ENCODE measurements at regions of chr19 and their contacts with region 1.

Region 1: DNA sequence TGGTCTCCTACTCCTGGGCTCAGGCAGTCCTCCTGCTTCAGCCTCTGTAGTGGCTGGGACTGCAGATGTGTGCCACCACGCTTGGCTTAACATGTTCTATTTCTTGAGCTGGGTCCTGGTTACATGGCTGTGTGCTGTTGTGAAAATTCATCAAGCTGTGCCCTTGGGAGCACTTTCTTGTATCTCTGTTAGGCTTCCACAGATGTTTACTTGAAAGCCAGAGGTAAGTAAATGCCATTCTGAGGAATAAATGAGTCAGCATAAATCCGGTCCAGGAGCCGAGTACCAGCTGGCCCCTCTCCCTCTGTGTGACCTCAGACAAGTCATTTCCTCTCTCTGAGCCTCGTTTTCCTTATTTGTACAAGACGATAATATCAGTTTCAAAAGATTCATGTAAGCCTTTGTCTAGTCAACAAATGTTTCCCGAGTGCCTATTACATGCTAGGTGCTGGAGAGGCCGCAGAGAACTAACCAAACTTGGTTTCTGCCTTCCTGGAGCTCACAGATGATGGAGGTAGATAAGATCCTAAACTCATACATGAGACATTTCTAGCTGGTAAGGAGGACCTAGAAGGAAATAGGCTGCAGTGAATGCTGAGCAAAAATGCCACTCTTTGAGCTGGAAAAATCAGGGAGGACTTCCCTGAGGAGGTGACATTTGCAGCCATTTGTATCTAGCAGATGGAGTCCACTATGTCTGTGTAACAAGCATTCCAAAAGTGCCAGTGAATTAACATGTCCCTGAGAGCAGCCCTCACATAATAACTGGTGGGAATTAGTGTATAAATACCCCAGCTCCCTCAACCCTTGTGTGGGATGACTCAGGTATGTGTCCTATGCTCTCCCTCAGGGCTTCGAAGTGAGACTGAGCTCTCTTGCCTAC is 2.7 kb upstream of the RASAL3 start:
- DNase-seq: peak; percentile 83
- H3K4me3 Mint-ChIP-seq: peak overlapping the region; percentile 66
- H3K27ac Mint-ChIP-seq: peak overlapping the region; percentile 98
- H3K4me1 Mint-ChIP-seq: peaks cover 64% of the 10 kb centered on the region
- H3K27me3 Mint-ChIP-seq: peaks cover 8% of the 10 kb centered on the region

Region 2: GRCh38 chr19:15379083-15379995 is 87.8 kb before region 1 on chr19 and contains the start of gene AKAP8:
- CTCF ChIA-PET with region 1: interaction called, 5 read pairs
- POLR2A ChIA-PET with region 1: interaction called, 13 read pairs
- DNase-seq: peak; percentile 98
- H3K4me3 Mint-ChIP-seq: peak within 1 kb of the TSS; percentile 87
- H3K27ac Mint-ChIP-seq: peak within 1 kb of the TSS; percentile 99
- H3K4me1 Mint-ChIP-seq: peaks cover 36% of the 10 kb centered on the region
- H3K27me3 Mint-ChIP-seq: no peaks in the 10 kb centered on the region
- total RNA-seq, gene AKAP8: 43.8 to 45.9 TPM

Region 3: GRCh38 chr19:15393963-15394362 is 73.1 kb before region 1 on chr19:
- CTCF ChIA-PET with region 1: no interaction called
- POLR2A ChIA-PET with region 1: no interaction called
- DNase-seq: no peak
- H3K4me3 Mint-ChIP-seq: no peak overlapping the region
- H3K27ac Mint-ChIP-seq: no peak overlapping the region
- H3K4me1 Mint-ChIP-seq: peaks cover 1% of the 10 kb centered on the region
- H3K27me3 Mint-ChIP-seq: no peaks in the 10 kb centered on the region

Region 4: DNA sequence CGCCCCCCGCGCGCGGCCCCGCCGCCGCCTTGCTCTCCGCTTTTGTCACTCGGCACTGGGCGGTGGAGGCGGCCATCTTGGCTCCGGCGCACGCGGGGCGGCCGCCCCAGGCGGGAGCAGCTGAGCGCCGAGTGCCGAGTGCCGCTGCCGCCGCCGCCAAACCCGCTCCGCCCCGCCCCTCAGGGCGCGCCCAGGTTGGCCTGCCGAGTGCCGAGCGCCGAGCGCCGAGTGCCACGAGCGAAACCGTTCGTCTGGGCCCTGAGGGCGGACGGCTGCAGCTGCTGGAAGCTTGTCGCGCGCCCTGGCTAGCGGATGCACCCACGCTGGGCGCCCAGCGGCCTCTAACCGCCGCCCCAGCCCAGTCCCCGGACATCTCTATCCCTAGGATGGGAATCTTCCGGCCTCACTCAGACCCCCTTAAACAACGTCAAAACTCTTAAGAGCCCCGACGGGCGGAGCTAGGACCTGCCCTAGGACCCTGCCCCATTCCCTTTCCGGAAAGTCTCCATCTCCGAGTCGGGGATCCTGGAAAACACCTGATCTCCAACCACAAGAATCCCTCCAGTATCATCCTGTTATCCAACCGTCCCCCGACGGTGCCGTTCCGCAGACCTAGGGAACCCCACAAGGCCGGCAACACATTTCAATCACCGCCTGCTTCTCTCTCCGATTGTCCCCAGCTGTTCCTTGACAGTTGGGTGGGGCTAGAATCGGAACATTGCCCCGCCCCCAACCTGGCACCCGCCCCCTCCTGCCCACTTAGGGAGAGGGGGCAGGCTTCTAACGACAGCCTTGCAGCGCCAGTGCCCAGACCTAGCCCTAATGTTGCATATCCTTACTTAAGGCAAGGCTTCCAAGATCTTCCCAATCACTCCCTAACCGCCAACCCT is 34.2 kb before region 1 on chr19:
- CTCF ChIA-PET with region 1: interaction called, 3 read pairs
- POLR2A ChIA-PET with region 1: interaction called, 71 read pairs
- DNase-seq: peak; percentile 95
- H3K4me3 Mint-ChIP-seq: peak overlapping the region; percentile 93
- H3K27ac Mint-ChIP-seq: peak overlapping the region; percentile 94
- H3K4me1 Mint-ChIP-seq: peaks cover 36% of the 10 kb centered on the region
- H3K27me3 Mint-ChIP-seq: no peaks in the 10 kb centered on the region

Region 5: DNA sequence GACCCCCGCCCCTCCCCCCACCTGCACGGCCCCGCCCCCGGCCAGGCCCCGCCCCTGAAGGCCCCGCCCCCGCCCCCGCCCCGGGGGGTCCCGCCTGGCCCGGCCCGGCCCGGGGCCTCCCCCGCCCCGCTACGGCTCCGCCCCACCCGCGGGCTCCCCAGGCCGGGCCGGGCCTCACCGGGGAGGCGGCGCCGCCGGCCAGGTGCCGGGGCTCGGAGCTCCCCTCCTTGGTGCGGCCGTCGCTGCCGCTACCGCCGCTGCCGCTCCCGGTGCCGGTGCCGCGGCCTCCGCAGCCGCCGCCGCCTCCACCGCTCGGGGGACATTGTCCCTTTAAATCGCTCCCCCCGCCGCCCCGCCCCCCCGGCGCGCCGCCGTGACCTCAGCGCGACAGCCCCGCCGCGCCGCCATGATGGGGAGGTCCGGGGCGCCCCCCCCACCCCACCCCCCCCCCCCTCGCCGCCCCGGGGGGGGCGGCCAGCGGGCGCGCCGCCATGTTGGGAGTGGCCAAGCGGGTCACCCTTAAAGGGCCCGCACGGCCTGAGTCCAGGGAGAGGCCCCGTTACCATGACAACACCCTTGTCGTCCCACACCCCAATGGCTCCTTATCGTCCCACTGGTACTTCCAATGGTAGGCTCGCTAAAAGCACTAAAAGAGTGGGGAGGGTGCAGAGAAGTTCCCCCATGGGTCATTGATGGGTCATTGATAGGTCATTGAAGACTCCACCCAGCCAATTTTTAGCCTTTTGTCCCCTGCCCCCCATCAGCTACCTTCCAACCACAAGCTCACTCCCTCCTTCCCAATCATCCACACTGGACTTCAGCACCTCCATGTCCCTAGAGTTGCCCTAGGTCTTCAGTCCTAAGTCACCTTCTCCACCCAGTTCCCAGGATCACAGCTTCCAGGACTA is 17.2 kb before region 1 on chr19 and contains the start of gene WIZ:
- CTCF ChIA-PET with region 1: interaction called, 7 read pairs
- POLR2A ChIA-PET with region 1: interaction called, 124 read pairs
- DNase-seq: peak; percentile 84
- H3K4me3 Mint-ChIP-seq: peak within 1 kb of the TSS; percentile 70
- H3K27ac Mint-ChIP-seq: peak within 1 kb of the TSS; percentile 81
- H3K4me1 Mint-ChIP-seq: peaks cover 29% of the 10 kb centered on the region
- H3K27me3 Mint-ChIP-seq: no peaks in the 10 kb centered on the region
- total RNA-seq, gene WIZ: 25.3 to 25.4 TPM

Region 6: GRCh38 chr19:15479391-15480345 is 12.6 kb after region 1 on chr19 and contains the start of gene PGLYRP2:
- CTCF ChIA-PET with region 1: no interaction called
- POLR2A ChIA-PET with region 1: interaction called, 14 read pairs
- DNase-seq: no peak
- H3K4me3 Mint-ChIP-seq: no peak within 1 kb of the TSS
- H3K27ac Mint-ChIP-seq: no peak within 1 kb of the TSS
- H3K4me1 Mint-ChIP-seq: peaks cover 35% of the 10 kb centered on the region
- H3K27me3 Mint-ChIP-seq: peaks cover 3% of the 10 kb centered on the region
- total RNA-seq, gene PGLYRP2: 0.08 to 0.10 TPM

Region 7: GRCh38 chr19:15508035-15508710 is 41.1 kb after region 1 on chr19 and contains the start of gene CYP4F22:
- CTCF ChIA-PET with region 1: interaction called, 4 read pairs
- POLR2A ChIA-PET with region 1: interaction called, 22 read pairs
- DNase-seq: no peak
- H3K4me3 Mint-ChIP-seq: peak within 1 kb of the TSS; percentile 46
- H3K27ac Mint-ChIP-seq: no peak within 1 kb of the TSS
- H3K4me1 Mint-ChIP-seq: peaks cover 31% of the 10 kb centered on the region
- H3K27me3 Mint-ChIP-seq: peaks cover 41% of the 10 kb centered on the region
- total RNA-seq, gene CYP4F22: 1.4 TPM

Region 8: DNA sequence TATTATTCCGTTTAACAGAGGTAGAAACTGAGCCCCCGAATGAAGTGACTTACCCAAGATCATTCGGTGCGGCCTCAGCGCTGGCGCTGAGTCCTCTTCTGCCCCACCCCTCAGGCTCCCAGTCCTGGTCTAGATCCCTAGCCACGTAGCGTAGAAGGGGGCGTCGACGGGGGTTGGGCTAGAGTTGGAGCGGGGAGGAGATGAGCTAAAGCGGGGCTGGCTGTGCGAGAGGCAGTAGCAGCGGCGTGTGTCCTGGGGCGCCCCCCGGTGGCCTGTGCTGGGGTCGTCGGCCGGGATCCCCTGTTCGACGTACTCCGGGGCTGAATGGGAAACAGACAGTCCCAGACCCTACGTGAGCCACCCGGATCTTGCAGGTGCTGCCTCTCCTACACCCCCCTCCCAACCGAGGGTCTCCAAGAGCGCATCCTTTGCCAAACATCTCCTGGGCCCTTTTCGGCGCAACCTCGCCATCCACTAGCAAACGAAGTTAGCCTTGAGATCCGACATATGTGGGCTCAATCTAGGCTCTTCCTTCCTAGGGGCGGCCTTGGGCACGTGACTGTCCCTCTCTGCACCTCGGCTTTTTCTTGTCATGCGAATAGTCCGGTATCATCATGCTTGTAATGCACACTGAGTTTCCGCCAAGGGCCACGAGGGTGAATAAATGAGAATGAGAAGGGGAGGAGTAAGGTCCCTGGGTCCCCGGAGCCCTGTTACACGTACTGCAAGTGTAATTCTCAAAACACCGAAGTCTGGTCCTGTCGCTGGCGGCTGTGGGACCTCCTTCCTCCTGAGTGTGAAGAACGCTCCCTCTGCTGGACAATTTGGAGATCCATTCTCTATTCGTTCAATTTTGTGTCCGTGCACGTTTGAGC is 88.9 kb after region 1 on chr19:
- CTCF ChIA-PET with region 1: interaction called, 28 read pairs
- POLR2A ChIA-PET with region 1: interaction called, 42 read pairs
- DNase-seq: peak; percentile 97
- H3K4me3 Mint-ChIP-seq: peak overlapping the region; percentile 85
- H3K27ac Mint-ChIP-seq: peak overlapping the region; percentile 76
- H3K4me1 Mint-ChIP-seq: peaks cover 29% of the 10 kb centered on the region
- H3K27me3 Mint-ChIP-seq: peaks cover 9% of the 10 kb centered on the region

Measured in activated CD4-positive, alpha-beta memory T cell treated with anti-CD3 and anti-CD28 coated beads, Interleukin-2, amount 10 ng/mL, durations not matched to agents 7 days and 5 days (primary cell).